IMR-90 (cell line): ENCODE measurements at regions of chr6 and their contacts with region 1.

Region 1: DNA sequence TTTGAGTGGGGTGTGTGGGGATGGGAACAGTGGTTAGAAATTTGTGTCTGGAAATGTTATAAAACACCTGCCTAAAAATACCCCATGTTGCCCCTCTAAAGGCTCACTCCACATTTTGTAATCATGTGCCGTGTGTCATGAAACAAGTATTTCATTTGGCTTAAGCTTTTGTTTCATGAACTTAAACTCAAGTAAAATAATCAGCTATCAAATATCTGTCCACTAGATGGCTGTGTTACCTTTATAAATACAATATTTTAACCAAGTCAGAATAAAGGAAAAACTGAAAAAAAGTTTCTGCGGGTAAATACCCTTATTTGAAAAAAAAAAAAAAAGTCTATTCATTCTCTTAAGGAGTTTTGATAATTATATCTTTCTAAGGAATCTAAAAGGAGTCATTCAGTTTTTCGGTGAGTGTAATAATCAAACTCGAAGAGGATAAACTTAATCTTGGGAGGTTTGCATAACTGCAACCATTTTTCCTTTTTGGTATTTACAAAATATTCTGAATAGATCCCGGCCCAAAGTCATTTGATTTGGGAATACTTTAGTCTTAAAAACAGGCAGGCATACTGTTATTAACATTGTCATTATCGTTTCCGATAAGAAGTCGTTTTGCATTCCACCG is 29.9 kb upstream of the MTRF1L start:
- DNase-seq: peak; percentile 81
- ATAC-seq: peak; percentile 59
- H3K4me3 ChIP-seq: no peak overlapping the region
- H3K27ac ChIP-seq: no peak overlapping the region; the same call in 1 of the 2 replicates
- H3K4me1 ChIP-seq: peaks cover 9% of the 10 kb centered on the region
- H3K27me3 ChIP-seq: no peaks in the 10 kb centered on the region
- CTCF ChIP-seq: peak; percentile 65
- POLR2A ChIP-seq: no peak
- RAD21 ChIP-seq: peak; percentile 61

Region 2: GRCh38 chr6:152261179-152261578 is 771.2 kb before region 1 on chr6:
- CTCF ChIA-PET with region 1: no interaction called
- POLR2A ChIA-PET with region 1: no interaction called
- dilution Hi-C with region 1: no loop called
- in situ Hi-C with region 1: no loop called
- intact Hi-C with region 1: no loop called
- DNase-seq: no peak
- ATAC-seq: no peak
- H3K4me3 ChIP-seq: no peak overlapping the region
- H3K27ac ChIP-seq: no peak overlapping the region
- H3K4me1 ChIP-seq: no peaks in the 10 kb centered on the region; the same call in 1 of the 2 replicates
- H3K27me3 ChIP-seq: no peaks in the 10 kb centered on the region
- CTCF ChIP-seq: no peak
- POLR2A ChIP-seq: no peak
- RAD21 ChIP-seq: no peak

Region 3: DNA sequence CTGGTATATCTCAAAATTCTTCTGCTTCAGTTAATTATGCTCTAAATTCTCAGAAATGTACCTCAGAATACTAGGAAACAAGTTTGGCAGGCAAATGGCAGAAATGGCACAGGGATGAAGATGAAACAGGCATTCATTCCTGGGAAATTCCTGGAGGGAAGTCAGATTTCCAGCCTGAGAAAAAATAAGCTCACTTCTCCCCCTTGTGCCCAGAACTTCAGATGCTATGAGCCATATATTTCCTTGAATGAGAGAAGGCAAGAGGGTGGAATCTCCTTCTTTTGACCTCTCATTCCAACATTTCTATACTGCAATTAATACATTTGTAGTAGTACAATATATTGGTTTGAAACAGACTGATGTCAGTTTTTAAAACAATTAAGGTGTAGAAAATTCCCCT is 75.9 kb after region 1 on chr6:
- CTCF ChIA-PET with region 1: interaction called, 3 read pairs
- POLR2A ChIA-PET with region 1: no interaction called
- dilution Hi-C with region 1: no loop called
- in situ Hi-C with region 1: no loop called
- intact Hi-C with region 1: loop called (anchors 1 kb)
- DNase-seq: no peak
- ATAC-seq: peak; percentile 51
- H3K4me3 ChIP-seq: no peak overlapping the region
- H3K27ac ChIP-seq: no peak overlapping the region
- H3K4me1 ChIP-seq: no peaks in the 10 kb centered on the region
- H3K27me3 ChIP-seq: no peaks in the 10 kb centered on the region
- CTCF ChIP-seq: peak; percentile 49
- POLR2A ChIP-seq: no peak
- RAD21 ChIP-seq: peak; percentile 54

Region 4: GRCh38 chr6:153131037-153131981 is 98.9 kb after region 1 on chr6 and contains the start of gene RGS17:
- CTCF ChIA-PET with region 1: no interaction called
- POLR2A ChIA-PET with region 1: no interaction called
- dilution Hi-C with region 1: no loop called
- in situ Hi-C with region 1: no loop called
- intact Hi-C with region 1: loop called (anchors 2 kb)
- DNase-seq: peak; percentile 73
- ATAC-seq: peak; percentile 85
- H3K4me3 ChIP-seq: peak within 1 kb of the TSS; percentile 62
- H3K27ac ChIP-seq: peak within 1 kb of the TSS; percentile 43
- H3K4me1 ChIP-seq: no peaks in the 10 kb centered on the region; the same call in 1 of the 2 replicates
- H3K27me3 ChIP-seq: peaks cover 2% of the 10 kb centered on the region; the same call in 1 of the 2 replicates
- CTCF ChIP-seq: no peak
- POLR2A ChIP-seq: no peak
- RAD21 ChIP-seq: no peak
- total RNA-seq, gene RGS17: 1.4 and 1.7 TPM in 2 replicates

Region 5: GRCh38 chr6:153231048-153231646 is 198.8 kb after region 1 on chr6:
- CTCF ChIA-PET with region 1: interaction called, 3 read pairs
- POLR2A ChIA-PET with region 1: no interaction called
- dilution Hi-C with region 1: no loop called
- in situ Hi-C with region 1: no loop called
- intact Hi-C with region 1: loop called (anchors 5 kb)
- DNase-seq: peak; percentile 12
- ATAC-seq: peak; percentile 65
- H3K4me3 ChIP-seq: no peak overlapping the region
- H3K27ac ChIP-seq: no peak overlapping the region
- H3K4me1 ChIP-seq: no peaks in the 10 kb centered on the region
- H3K27me3 ChIP-seq: no peaks in the 10 kb centered on the region
- CTCF ChIP-seq: peak; percentile 60
- POLR2A ChIP-seq: no peak
- RAD21 ChIP-seq: peak; percentile 56

Region 6: DNA sequence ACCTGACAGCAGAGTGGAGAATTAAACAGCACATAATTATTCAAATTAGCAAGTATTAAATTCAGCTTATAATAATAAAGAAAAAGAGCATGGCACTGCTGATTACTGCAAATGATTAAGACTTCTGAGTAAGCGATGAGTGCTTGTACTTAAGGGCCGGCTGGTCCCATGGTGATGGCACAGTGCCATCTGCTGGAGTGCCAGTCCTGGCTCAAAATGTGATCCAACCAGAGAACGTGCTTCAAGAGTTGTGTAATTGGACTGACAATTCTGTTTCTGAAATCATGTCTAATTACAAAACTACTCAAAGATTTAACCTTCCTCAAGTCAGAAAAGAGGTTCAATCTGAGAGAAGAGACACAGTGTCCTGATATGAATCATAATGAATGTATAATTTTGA is 280.3 kb after region 1 on chr6:
- CTCF ChIA-PET with region 1: interaction called, 3 read pairs
- POLR2A ChIA-PET with region 1: no interaction called
- dilution Hi-C with region 1: no loop called
- in situ Hi-C with region 1: no loop called
- intact Hi-C with region 1: loop called (anchors 1 kb)
- DNase-seq: peak; percentile 35
- ATAC-seq: peak; percentile 61; the same call in 1 of the 2 replicates
- H3K4me3 ChIP-seq: no peak overlapping the region
- H3K27ac ChIP-seq: no peak overlapping the region
- H3K4me1 ChIP-seq: no peaks in the 10 kb centered on the region
- H3K27me3 ChIP-seq: no peaks in the 10 kb centered on the region
- CTCF ChIP-seq: peak; percentile 42
- POLR2A ChIP-seq: no peak
- RAD21 ChIP-seq: peak; percentile 50

Region 7: GRCh38 chr6:153449279-153449678 is 416.9 kb after region 1 on chr6:
- CTCF ChIA-PET with region 1: no interaction called
- POLR2A ChIA-PET with region 1: no interaction called
- dilution Hi-C with region 1: no loop called
- in situ Hi-C with region 1: no loop called
- intact Hi-C with region 1: no loop called
- DNase-seq: no peak
- ATAC-seq: no peak
- H3K4me3 ChIP-seq: no peak overlapping the region
- H3K27ac ChIP-seq: no peak overlapping the region
- H3K4me1 ChIP-seq: no peaks in the 10 kb centered on the region
- H3K27me3 ChIP-seq: no peaks in the 10 kb centered on the region
- CTCF ChIP-seq: no peak
- POLR2A ChIP-seq: no peak
- RAD21 ChIP-seq: no peak

Region 8: GRCh38 chr6:153511896-153512496 is 479.6 kb after region 1 on chr6:
- CTCF ChIA-PET with region 1: no interaction called
- POLR2A ChIA-PET with region 1: no interaction called
- dilution Hi-C with region 1: no loop called
- in situ Hi-C with region 1: loop called (anchors 25 kb)
- intact Hi-C with region 1: loop called (anchors 1 kb)
- DNase-seq: peak; percentile 3
- ATAC-seq: peak; percentile 82; the same call in 1 of the 2 replicates
- H3K4me3 ChIP-seq: no peak overlapping the region
- H3K27ac ChIP-seq: no peak overlapping the region
- H3K4me1 ChIP-seq: no peaks in the 10 kb centered on the region
- H3K27me3 ChIP-seq: no peaks in the 10 kb centered on the region
- CTCF ChIP-seq: peak; percentile 57
- POLR2A ChIP-seq: no peak
- RAD21 ChIP-seq: peak; percentile 53